ENCODE measurements at regions of chr6 and their contacts with region 1.

Region 1: GRCh38 chr6:36659271-36659670 is 19.2 kb upstream of the CDKN1A start:
- DNase-seq: peak; percentile 75
- H3K4me3 ChIP-seq: no peak overlapping the region
- H3K27ac ChIP-seq: no peak overlapping the region
- H3K4me1 ChIP-seq: peaks cover 25% of the 10 kb centered on the region
- H3K27me3 ChIP-seq: no peaks in the 10 kb centered on the region
- CTCF ChIP-seq: no peak

Region 2: DNA sequence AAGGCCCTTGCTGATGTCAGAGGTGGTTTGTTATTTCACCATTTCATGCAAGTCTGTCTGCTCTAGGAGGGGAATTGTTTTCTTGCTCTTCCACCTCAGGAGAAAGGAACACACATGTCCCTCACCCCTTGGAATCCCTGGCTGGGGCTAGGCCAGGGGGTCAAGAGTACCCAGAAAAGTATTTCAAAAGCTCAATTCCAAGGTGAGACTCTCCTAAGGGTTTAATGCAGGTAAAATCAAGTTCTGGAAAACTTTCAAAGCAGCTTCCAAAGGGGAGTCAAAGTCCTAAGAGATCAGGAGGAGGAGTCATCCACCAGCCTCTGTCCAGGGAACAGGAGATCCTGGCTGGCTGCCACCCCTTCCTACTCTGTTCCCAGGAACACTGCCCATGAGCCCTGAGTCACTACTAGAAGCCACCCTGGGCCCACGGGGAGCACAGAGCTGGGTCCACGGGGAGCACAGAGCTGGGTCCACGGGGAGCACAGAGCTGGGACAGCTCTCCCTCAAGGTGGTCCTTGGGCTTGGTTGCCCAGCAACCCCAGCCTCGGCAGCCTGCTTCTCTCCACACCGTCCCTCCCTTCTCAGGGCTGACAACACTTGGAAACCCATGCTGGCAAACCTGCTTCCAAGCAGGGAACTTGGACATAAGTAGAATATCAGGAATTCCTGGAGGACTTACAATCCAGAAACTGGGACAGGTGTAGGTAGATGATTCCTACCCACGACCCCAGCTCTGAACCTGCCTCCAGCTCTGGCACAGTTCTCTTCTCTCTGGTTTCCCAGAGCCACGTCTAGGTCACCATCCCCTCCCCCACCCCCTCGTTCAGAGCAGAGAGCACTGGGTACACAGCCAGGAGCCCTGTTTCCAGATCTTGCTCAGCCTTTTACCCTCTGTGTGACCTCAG is 16.1 kb before region 1 on chr6:
- CTCF ChIA-PET with region 1: no interaction called
- dilution Hi-C with region 1: no loop called
- in situ Hi-C with region 1: no loop called
- intact Hi-C with region 1: loop called (anchors 2 kb)
- DNase-seq: peak; percentile 77
- H3K4me3 ChIP-seq: no peak overlapping the region
- H3K27ac ChIP-seq: no peak overlapping the region
- H3K4me1 ChIP-seq: peaks cover 21% of the 10 kb centered on the region
- H3K27me3 ChIP-seq: no peaks in the 10 kb centered on the region
- CTCF ChIP-seq: no peak

Region 3: DNA sequence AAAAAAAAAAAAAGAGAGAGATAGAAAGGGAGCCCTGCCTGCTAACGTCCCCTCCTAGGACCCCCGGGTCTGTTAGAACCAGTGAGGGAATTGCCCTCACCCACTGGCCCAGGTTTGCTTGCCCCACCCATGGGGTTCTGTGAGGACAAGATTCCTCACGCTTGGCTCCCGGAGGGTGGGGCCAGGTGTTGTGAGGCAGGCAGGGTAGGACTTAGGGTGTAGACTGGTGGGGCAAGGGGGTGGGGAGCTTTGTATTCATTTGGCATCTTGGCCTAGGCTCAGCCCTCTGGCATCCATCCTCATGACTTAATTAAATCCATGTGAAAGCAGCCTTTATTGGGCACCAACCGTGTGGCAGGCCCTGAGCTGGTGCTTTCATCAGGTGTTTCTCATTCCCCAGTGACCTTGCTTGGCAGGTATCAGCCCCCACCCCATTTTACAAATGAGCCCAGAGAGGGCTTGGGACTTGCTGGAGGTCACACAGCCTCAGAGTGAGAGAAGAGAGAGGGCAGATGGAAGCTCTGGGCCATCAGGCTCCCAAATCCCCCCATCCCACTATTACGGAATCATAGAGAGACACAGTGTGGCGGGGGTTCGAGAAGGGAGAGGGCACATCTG is 57.3 kb after region 1 on chr6:
- CTCF ChIA-PET with region 1: no interaction called
- dilution Hi-C with region 1: no loop called
- in situ Hi-C with region 1: no loop called
- intact Hi-C with region 1: no loop called
- DNase-seq: no peak
- H3K4me3 ChIP-seq: no peak overlapping the region
- H3K27ac ChIP-seq: no peak overlapping the region
- H3K4me1 ChIP-seq: no peaks in the 10 kb centered on the region
- H3K27me3 ChIP-seq: no peaks in the 10 kb centered on the region
- CTCF ChIP-seq: no peak

Region 4: DNA sequence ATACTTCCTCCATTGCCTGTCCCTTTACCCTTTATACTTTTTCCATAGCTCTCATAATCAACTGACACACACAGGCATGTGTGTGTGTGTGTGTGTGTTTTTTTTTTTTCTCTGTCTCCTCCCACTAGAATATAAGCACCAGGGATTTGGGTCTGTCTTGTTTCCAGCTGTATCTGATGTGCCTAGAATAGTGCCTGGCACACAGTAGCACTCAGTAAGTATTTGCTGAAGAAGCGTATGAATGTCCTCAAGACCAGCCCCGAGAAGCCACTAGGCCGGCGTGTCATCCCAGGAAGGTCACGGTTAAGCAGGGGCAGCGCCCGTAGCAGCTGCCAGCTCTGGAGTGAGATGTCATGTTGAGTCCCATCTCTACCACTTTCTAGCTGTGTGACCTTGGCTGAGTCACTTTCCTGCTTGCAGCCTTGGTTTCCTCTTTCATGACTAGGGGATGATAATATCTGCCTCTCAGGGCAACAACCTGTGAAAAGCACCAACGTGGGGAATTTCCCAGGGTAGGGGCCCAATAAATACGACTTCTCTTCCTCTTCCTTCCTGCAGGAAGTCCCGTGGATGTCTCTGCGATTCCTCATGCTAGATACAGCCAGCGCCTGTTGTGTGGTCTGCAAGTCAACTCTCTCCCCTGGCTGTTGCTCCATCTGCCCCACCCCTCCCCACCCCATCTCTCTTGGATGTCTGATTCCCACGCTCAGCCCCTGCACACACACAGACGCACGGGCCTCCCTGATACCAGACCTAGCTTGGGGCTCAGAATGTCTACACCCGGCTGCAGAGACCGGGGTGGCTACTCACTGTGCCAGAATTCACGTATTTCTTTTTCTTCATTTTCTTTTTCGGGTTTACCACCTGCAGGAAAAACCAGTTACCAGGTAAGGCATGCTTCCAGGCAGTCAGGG is 96.4 kb after region 1 on chr6:
- CTCF ChIA-PET with region 1: no interaction called
- dilution Hi-C with region 1: no loop called
- in situ Hi-C with region 1: no loop called
- intact Hi-C with region 1: no loop called
- DNase-seq: peak; percentile 89
- H3K4me3 ChIP-seq: no peak overlapping the region
- H3K27ac ChIP-seq: no peak overlapping the region
- H3K4me1 ChIP-seq: peaks cover 15% of the 10 kb centered on the region
- H3K27me3 ChIP-seq: no peaks in the 10 kb centered on the region
- CTCF ChIP-seq: no peak